SK-MEL-5 (cell line): ENCODE measurements at regions of chr13 and their contacts with region 1.

Region 1: DNA sequence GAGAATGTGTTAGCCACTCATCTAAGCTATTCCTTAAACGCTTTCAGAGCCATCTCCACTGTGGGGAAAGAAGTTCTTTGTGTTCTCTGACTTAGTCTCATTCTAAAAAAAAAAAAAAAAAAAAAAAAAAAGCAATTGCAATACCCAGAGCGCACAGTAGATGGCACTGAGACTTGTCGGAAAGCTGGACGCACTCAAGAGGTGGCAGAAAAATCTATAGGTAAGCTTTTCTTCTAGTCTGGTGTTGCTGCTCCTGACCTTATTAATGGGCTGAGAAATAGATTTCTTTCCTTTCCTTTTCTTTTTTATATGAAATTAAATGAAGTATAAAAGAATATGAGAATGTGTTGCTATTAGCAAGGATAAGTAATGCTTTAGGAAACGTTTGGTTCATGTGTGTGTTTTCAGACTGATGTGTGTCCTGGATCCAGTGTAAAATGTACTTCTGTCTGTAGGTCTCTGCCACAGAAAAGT is 4.7 kb upstream of the GJB2 start:
- DNase-seq: peak; percentile 82

Region 2: DNA sequence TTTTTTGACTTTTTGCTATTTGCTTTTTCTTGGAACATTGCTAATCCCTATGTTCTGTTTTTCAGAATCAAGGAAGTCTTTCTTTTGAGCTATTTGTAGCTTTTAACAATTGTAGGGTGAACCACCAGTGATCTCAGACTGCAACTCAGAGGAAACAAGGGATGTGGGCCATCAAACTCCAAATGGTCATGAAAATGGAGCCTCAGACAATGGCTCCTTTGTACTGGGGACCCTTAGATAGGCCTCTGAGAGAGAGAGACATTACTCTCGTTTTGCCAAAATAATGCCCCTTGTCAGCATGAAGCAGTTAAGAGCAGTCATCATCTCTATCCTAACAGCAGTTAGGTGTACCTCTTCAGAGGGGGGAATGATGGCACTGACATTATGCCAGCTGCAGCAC is 91.2 kb after region 1 on chr13:
- in situ Hi-C with region 1: loop called (anchors 10 kb)
- DNase-seq: peak; percentile 86